ENCODE measurements at regions of chr6 and their contacts with region 1.

Region 1: DNA sequence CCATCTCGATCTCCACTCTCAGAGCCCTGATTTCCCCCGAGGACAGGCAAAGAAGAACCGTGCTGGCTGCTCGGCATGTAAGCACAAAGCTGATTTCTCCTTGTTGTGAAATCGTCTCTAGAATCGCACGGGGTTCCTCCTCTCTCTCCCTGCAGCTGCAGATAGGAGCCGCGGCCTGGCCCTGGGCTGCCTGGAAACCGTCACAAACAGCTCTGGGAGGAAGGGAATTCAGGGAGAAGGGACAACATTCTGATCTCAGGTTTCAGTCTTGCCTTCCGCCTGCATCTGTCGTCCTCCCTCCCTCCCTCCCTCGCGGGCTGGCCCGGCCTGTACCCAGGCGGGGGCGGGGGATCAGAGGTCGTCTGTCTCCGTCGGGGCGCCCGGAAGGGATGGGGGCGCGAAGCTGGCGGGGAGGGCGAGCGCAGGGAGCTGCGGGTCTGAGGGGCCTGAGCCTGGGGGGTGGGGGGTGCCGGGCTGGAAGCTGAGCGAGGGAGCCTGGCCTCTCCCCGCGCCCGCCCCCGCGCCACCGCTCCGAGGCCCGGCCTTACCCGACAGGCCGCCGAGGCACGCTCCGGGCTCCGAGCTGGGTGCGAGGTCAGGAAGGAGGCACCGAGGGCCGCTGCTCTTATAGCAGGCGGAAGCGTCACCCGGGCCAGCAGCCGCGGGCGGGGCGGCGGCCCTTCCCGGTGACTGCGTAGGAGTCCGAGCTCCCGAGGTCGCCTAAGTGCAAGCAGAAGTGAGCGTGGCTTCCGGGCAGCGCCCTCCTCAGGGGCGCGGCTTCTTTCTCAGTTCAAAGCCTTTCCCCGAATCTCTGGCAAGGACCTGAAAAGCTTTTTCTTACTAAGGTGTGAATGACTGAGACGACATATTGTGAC is at the start of gene SERPINB1:
- DNase-seq: peak; percentile 95 to 97 (median 96)
- H3K4me3 ChIP-seq: peak within 1 kb of the TSS; percentile 58 to 90 (median 61)
- H3K4me3 Mint-ChIP-seq: peak within 1 kb of the TSS; percentile 89 to 98
- H3K27ac ChIP-seq: peak within 1 kb of the TSS; percentile 93 to 94
- H3K27ac Mint-ChIP-seq: peak within 1 kb of the TSS; percentile 94 to 98 (median 98)
- H3K4me1 ChIP-seq: peaks cover 53 to 77% of the 10 kb centered on the region in 2 donors
- H3K4me1 Mint-ChIP-seq: peaks cover 72% of the 10 kb centered on the region
- H3K27me3 ChIP-seq: no peaks in the 10 kb centered on the region
- H3K27me3 Mint-ChIP-seq: no peaks in the 10 kb centered on the region
- CTCF ChIP-seq: no peak
- polyA plus RNA-seq, gene SERPINB1: 126 to 307 (median 306) TPM

Region 2: GRCh38 chr6:2791124-2791974 is 50.2 kb before region 1 on chr6:
- intact Hi-C with region 1: loop called in 1 of 2 experiments (anchors 5 kb)
- DNase-seq: peak; percentile 72 to 81 (median 79)
- H3K4me3 ChIP-seq: no peak overlapping the region
- H3K4me3 Mint-ChIP-seq: no peak overlapping the region
- H3K27ac ChIP-seq: peak overlapping the region; percentile 55 to 94
- H3K27ac Mint-ChIP-seq: peak overlapping the region; percentile 88 to 100 (median 99)
- H3K4me1 ChIP-seq: peaks cover 51 to 57% of the 10 kb centered on the region in 2 donors
- H3K4me1 Mint-ChIP-seq: peaks cover 51% of the 10 kb centered on the region
- H3K27me3 ChIP-seq: no peaks in the 10 kb centered on the region
- H3K27me3 Mint-ChIP-seq: peaks cover 0 to 4% (median 1%) of the 10 kb centered on the region in 3 donors
- CTCF ChIP-seq: peak; percentile 74

Region 3: DNA sequence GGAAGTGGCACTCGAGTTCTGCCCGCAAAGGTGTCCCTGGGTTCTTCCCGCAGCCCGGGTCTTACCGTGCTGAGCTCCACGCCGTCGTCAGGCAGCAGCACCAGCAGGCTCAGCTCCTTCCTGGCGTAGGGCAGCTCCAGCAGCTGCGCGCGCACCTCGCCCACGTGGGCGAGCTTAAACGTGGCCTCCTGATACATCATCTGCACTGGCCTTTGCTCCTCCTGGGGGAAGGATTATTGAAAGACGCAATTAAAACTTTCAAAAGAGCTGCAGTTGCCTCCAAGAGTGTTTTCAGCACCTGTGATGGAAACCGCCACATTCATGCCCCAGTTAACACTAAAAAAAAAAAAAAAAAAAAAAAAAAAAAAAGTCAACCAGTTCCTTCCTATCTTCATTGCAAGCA is 50.3 kb after region 1 on chr6:
- intact Hi-C with region 1: loop called in 1 of 2 experiments (anchors 10 kb)
- DNase-seq: no peak
- H3K4me3 ChIP-seq: no peak overlapping the region
- H3K4me3 Mint-ChIP-seq: no peak overlapping the region
- H3K27ac ChIP-seq: no peak overlapping the region
- H3K27ac Mint-ChIP-seq: no peak overlapping the region
- H3K4me1 ChIP-seq: peaks cover 0 to 1% of the 10 kb centered on the region in 2 donors
- H3K4me1 Mint-ChIP-seq: peaks cover 2% of the 10 kb centered on the region
- H3K27me3 ChIP-seq: no peaks in the 10 kb centered on the region
- H3K27me3 Mint-ChIP-seq: no peaks in the 10 kb centered on the region
- CTCF ChIP-seq: no peak

Region 4: DNA sequence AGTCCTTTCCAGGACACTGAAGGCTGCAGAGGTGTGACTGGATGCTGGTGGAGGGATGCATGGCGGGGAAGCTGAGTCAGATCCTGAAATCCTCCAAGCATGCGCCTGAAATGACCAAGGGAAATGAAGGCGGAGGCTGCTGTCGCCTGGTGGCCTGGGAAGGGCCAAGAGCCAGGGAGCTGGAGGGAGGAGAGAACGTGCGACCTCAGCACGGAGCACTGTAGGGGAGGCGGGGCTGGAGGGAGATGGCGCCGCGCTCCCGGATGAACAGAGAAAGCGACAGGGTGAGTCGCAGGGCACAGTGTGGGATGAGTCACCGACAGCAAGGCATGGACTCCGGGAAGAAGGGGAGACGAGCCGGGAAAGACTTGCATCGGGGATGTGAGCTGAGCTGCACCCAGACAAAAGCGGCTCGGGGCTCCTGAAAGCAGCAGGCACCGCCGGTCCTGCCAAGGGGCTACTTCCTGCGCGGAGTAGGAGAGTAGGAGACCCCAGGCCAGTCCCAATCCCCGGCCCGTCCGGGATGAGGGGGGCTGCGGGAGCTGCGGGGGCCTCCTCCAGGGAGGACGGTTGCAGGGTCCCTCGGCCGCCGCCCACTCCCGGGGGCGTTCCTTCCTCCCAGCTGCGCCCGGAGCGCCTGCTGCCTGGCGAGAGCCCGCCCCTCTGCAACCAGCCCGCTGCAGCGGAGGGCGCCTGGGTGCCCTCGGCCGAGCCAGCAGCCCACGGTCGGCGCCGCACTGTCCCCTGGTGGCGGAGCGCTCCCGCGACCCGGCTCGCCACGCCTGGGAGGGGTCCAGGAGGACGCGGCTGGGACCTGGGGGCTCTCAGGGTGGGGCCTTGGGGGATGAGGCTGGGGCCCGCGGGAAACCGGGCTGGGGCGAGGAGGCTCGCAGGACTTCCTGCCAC is 147.2 kb after region 1 on chr6:
- intact Hi-C with region 1: loop called (anchors 5 to 10 kb)
- DNase-seq: peak; percentile 73 to 89 (median 76)
- H3K4me3 ChIP-seq: peak overlapping the region; percentile 80 to 100 (median 96)
- H3K4me3 Mint-ChIP-seq: peak overlapping the region; percentile 89 to 98
- H3K27ac ChIP-seq: peak overlapping the region; percentile 82 to 94
- H3K27ac Mint-ChIP-seq: peak overlapping the region; percentile 97 to 99 (median 97)
- H3K4me1 ChIP-seq: peaks cover 19 to 32% of the 10 kb centered on the region in 2 donors
- H3K4me1 Mint-ChIP-seq: peaks cover 26% of the 10 kb centered on the region
- H3K27me3 ChIP-seq: no peaks in the 10 kb centered on the region
- H3K27me3 Mint-ChIP-seq: peaks cover 2 to 7% (median 2%) of the 10 kb centered on the region in 3 donors
- CTCF ChIP-seq: peak; percentile 93

Region 5: GRCh38 chr6:3068329-3069214 is 227.1 kb after region 1 on chr6 and contains the start of gene RIPK1:
- intact Hi-C with region 1: loop called in 1 of 2 experiments (anchors 5 kb)
- DNase-seq: peak; percentile 80 to 89 (median 86)
- H3K4me3 ChIP-seq: peak within 1 kb of the TSS; percentile 83 to 91 (median 84)
- H3K4me3 Mint-ChIP-seq: peak within 1 kb of the TSS; percentile 91 to 97
- H3K27ac ChIP-seq: peak within 1 kb of the TSS; percentile 89 to 93
- H3K27ac Mint-ChIP-seq: peak within 1 kb of the TSS; percentile 94 to 98 (median 97)
- H3K4me1 ChIP-seq: peaks cover 24 to 41% of the 10 kb centered on the region in 2 donors
- H3K4me1 Mint-ChIP-seq: peaks cover 40% of the 10 kb centered on the region
- H3K27me3 ChIP-seq: no peaks in the 10 kb centered on the region
- H3K27me3 Mint-ChIP-seq: peaks cover 2 to 5% (median 5%) of the 10 kb centered on the region in 3 donors
- CTCF ChIP-seq: peak; percentile 11
- polyA plus RNA-seq, gene RIPK1: 6.0 to 9.6 (median 9.6) TPM